AG04449 (cell line): ENCODE measurements at regions of chr11 and their contacts with region 1.

Region 1: DNA sequence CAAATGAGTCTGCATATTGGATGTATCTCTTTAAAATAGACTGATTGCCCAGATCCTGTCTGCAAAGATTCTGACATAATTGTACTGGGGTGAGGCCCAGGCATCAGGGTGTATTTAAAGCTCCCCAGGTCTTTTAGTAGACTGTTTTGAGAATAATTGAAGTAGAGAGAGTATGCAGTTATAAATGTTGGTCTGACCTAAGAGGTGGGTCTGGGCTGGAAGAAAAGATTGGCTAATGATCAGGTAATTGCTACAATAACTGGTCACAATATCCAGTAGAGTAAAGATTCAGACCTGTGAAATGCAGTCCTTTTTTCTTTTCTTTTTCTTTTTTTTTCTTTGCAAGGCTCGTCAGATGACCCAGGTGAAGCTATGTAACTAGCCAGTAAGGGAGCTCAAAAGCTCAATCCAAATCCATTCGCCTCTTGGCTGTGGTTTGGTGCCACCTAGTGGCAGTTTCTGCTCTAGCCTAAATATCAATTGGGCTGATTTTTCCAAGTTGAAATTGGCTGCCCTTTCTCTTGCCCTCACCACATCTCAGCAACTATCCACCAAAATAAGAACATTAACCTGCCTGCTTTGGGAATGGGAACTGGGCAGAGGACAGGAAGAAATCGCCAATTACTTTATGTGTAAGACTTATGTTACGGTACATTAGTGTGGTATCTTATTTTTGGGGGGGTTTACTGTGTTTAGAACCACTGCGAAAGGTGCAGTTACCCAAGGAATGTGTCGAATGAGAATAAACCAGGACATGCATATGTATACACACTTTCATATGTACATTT is 45.9 kb downstream of the ZNF143 start:
- DNase-seq: peak; percentile 42
- H3K4me3 ChIP-seq: no peak overlapping the region
- CTCF ChIP-seq: peak; percentile 69

Region 2: GRCh38 chr11:9170450-9170849 is 336.2 kb before region 1 on chr11:
- CTCF ChIA-PET with region 1: interaction called, 10 read pairs
- POLR2A ChIA-PET with region 1: no interaction called
- DNase-seq: no peak
- H3K4me3 ChIP-seq: no peak overlapping the region
- CTCF ChIP-seq: no peak

Region 3: DNA sequence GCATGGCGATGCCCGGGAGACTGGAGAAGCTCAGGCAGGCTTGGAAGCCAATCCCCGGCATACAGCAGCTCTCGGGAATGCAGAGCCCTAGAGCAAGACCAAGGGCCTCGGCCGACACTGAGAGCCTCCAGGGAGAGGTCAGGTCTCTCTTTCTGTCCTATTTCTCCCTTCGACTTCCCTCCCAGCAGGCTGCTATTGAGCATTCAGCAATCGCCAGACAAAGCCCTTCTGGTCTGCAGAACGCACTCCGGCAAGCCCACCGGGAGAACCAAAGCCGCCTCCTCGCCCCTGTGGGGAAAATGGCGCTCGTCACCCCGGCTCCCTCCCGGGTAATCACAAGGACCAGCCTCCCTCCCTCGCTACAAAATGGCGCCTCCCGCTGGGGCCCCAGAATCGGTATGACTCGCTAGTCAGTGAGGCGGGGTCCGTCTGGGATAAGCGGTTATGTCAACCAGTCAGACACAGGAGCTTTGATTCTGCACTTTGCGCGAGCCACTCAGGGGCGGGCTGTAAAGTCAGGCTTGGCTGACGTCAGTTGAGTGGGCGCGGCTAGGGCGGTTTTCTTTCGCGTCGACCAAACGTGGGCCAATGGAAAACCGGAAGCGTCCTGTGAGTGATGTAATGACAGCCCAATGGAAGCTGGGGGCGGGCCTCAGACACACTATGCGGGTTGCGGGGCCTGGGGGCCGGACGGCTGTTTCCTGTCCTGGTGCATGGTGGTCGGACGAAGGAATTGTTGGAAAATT is 46.2 kb before region 1 on chr11 and contains the start of gene ZNF143:
- CTCF ChIA-PET with region 1: interaction called, 15 read pairs
- POLR2A ChIA-PET with region 1: interaction called, 6 read pairs
- DNase-seq: peak; percentile 99
- H3K4me3 ChIP-seq: peak within 1 kb of the TSS; percentile 90
- CTCF ChIP-seq: no peak

Region 4: DNA sequence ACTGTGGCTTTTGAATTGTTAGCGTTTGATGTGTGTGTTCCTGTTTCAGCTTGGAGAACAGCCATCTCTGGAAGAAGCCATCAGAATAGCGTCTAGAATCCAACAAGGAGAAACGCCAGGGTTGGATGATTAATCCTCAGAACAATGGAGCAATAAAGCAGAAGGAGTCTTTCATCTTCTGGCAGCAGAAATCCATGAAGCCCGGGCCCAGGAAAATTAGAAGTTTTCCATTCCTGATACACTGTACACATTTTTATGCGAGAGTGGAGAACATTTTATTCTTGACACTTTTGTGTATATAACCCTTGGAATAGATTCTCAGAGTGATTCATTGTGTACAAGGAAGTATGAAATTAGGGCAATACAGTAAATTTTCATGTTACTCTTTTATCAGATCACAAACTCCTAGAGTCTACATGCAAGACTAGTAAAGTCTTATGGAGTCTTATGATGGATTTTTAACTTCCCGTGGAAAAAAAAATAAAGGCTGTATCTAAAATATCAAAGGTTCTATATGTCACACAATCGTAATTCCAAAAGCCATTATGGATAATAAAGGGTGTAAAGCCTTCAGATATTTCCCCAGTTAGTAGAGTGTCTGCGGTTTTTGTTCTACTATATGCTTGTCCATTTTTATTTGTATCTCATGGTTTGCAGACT is 20.9 kb after region 1 on chr11:
- CTCF ChIA-PET with region 1: interaction called, 18 read pairs
- POLR2A ChIA-PET with region 1: no interaction called
- DNase-seq: peak; percentile 33
- H3K4me3 ChIP-seq: no peak overlapping the region
- CTCF ChIP-seq: no peak

Region 5: DNA sequence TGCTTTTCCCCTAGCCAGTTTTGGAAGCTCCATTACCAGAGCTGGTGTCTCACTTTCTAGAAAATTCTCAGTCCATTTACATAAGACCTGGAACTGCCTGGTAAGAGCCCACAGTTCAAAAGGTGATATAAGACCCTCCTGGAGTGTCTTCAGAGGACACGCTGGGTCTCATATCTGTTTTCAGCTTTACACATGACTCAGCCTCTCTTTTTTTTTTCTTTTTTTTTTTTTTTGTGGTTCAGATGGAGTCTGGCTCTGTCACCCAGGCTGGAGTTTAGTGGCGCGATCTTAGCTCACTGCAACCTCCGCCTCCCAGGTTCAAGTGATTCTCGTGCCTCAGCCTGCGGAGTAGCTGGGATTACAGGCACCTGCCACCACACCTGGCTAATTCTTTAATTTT is 97.5 kb after region 1 on chr11:
- CTCF ChIA-PET with region 1: no interaction called
- POLR2A ChIA-PET with region 1: no interaction called
- DNase-seq: no peak
- H3K4me3 ChIP-seq: no peak overlapping the region
- CTCF ChIP-seq: no peak